B cell (primary cell): ENCODE measurements at regions of chr14 and their contacts with region 1.

Region 1: GRCh38 chr14:73008501-73008900 is 18.4 kb downstream of the ZFYVE1 start:
- DNase-seq: no peak
- ATAC-seq: no peak
- H3K4me3 ChIP-seq: no peak overlapping the region
- H3K4me3 Mint-ChIP-seq: no peak overlapping the region
- H3K27ac ChIP-seq: no peak overlapping the region
- H3K27ac Mint-ChIP-seq: no peak overlapping the region
- H3K4me1 ChIP-seq: no peaks in the 10 kb centered on the region
- H3K4me1 Mint-ChIP-seq: no peaks in the 10 kb centered on the region
- H3K27me3 ChIP-seq: no peaks in the 10 kb centered on the region
- H3K27me3 Mint-ChIP-seq: no peaks in the 10 kb centered on the region
- CTCF ChIP-seq: no peak

Region 2: GRCh38 chr14:73809391-73809790 is 800.9 kb after region 1 on chr14:
- CTCF ChIA-PET with region 1: no interaction called
- POLR2A ChIA-PET with region 1: interaction called, 12 read pairs
- intact Hi-C with region 1: no loop called
- DNase-seq: no peak
- ATAC-seq: no peak
- H3K4me3 ChIP-seq: no peak overlapping the region
- H3K4me3 Mint-ChIP-seq: no peak overlapping the region
- H3K27ac ChIP-seq: no peak overlapping the region
- H3K27ac Mint-ChIP-seq: no peak overlapping the region
- H3K4me1 ChIP-seq: peaks cover 0 to 4% of the 10 kb centered on the region in 2 donors
- H3K4me1 Mint-ChIP-seq: peaks cover 12% of the 10 kb centered on the region
- H3K27me3 ChIP-seq: no peaks in the 10 kb centered on the region
- H3K27me3 Mint-ChIP-seq: peaks cover 7% of the 10 kb centered on the region
- CTCF ChIP-seq: no peak